Caco-2 (cell line): ENCODE measurements at regions of chr12 and their contacts with region 1.

Region 1: GRCh38 chr12:5200278-5201087 is 156.8 kb downstream of the KCNA5 start:
- DNase-seq: peak; percentile 85 to 91
- H3K4me3 ChIP-seq: no peak overlapping the region
- H3K4me3 Mint-ChIP-seq: no peak overlapping the region
- H3K27ac Mint-ChIP-seq: peak overlapping the region; percentile 31
- H3K4me1 ChIP-seq: peaks cover 33% of the 10 kb centered on the region
- H3K4me1 Mint-ChIP-seq: peaks cover 36% of the 10 kb centered on the region
- H3K27me3 ChIP-seq: no peaks in the 10 kb centered on the region
- H3K27me3 Mint-ChIP-seq: no peaks in the 10 kb centered on the region
- CTCF ChIP-seq: peak; percentile 97

Region 2: DNA sequence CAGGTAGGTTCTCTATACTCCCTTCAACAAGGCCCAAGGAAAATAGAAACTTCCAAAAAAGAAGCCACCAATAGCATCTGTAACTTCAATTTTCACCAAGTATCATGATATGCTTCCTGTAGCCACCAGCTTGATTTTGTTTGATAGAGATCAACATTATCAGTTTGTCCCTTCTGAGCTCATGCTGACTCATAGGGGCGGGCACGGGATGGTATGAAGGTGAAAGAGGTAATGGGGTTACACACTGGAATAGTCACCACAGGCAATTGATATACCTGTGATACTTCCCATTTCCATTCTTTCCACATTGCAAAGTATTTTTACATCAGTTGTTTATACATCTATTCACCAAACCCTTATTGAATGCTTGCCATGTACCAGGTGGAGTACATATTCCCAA is 22.8 kb before region 1 on chr12:
- CTCF ChIA-PET with region 1: no interaction called
- POLR2A ChIA-PET with region 1: no interaction called
- intact Hi-C with region 1: no loop called
- DNase-seq: no peak
- H3K4me3 ChIP-seq: no peak overlapping the region
- H3K4me3 Mint-ChIP-seq: no peak overlapping the region
- H3K27ac Mint-ChIP-seq: no peak overlapping the region
- H3K4me1 ChIP-seq: no peaks in the 10 kb centered on the region
- H3K4me1 Mint-ChIP-seq: no peaks in the 10 kb centered on the region
- H3K27me3 ChIP-seq: no peaks in the 10 kb centered on the region
- H3K27me3 Mint-ChIP-seq: no peaks in the 10 kb centered on the region
- CTCF ChIP-seq: no peak

Region 3: DNA sequence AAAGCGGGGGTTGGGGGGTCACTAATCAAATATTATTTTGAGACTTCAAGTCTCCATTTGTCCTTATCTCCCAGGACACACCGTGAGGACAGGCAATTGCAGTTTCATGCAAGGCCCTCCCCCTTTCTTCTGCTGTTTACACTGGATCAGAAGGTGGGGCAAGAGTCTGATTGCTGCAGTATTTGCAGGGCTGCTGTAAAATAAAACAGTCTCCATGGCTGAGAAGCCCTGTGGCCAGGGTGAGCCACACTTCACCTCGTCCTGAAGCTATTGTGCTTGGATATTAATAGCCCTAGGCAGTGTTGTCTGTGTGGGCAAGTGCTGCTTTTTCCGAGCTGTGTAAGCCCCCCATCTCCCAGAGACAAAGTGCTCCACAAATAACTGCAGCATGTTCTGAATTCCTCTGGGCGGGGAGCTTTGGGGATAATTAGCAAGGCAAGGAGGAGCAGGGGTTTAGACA is 44.1 kb after region 1 on chr12:
- CTCF ChIA-PET with region 1: interaction called, 3 read pairs
- POLR2A ChIA-PET with region 1: no interaction called
- intact Hi-C with region 1: loop called (anchors 1 kb)
- DNase-seq: peak; percentile 87 to 89
- H3K4me3 ChIP-seq: no peak overlapping the region
- H3K4me3 Mint-ChIP-seq: peak overlapping the region; percentile 48
- H3K27ac Mint-ChIP-seq: peak overlapping the region; percentile 81
- H3K4me1 ChIP-seq: peaks cover 49% of the 10 kb centered on the region
- H3K4me1 Mint-ChIP-seq: peaks cover 38% of the 10 kb centered on the region
- H3K27me3 ChIP-seq: no peaks in the 10 kb centered on the region
- H3K27me3 Mint-ChIP-seq: no peaks in the 10 kb centered on the region
- CTCF ChIP-seq: no peak

Region 4: GRCh38 chr12:5294274-5295070 is 94.0 kb after region 1 on chr12:
- CTCF ChIA-PET with region 1: interaction called, 3 read pairs
- POLR2A ChIA-PET with region 1: no interaction called
- intact Hi-C with region 1: loop called (anchors 5 kb)
- DNase-seq: no peak
- H3K4me3 ChIP-seq: no peak overlapping the region
- H3K4me3 Mint-ChIP-seq: no peak overlapping the region
- H3K27ac Mint-ChIP-seq: no peak overlapping the region
- H3K4me1 ChIP-seq: peaks cover 8% of the 10 kb centered on the region
- H3K4me1 Mint-ChIP-seq: peaks cover 6% of the 10 kb centered on the region
- H3K27me3 ChIP-seq: no peaks in the 10 kb centered on the region
- H3K27me3 Mint-ChIP-seq: no peaks in the 10 kb centered on the region
- CTCF ChIP-seq: no peak

Region 5: GRCh38 chr12:5395443-5396271 is 195.2 kb after region 1 on chr12:
- CTCF ChIA-PET with region 1: no interaction called
- POLR2A ChIA-PET with region 1: interaction called, 5 read pairs
- intact Hi-C with region 1: loop called (anchors 2 kb)
- DNase-seq: no peak
- H3K4me3 ChIP-seq: no peak overlapping the region
- H3K4me3 Mint-ChIP-seq: no peak overlapping the region
- H3K27ac Mint-ChIP-seq: peak overlapping the region; percentile 14
- H3K4me1 ChIP-seq: peaks cover 23% of the 10 kb centered on the region
- H3K4me1 Mint-ChIP-seq: peaks cover 15% of the 10 kb centered on the region
- H3K27me3 ChIP-seq: no peaks in the 10 kb centered on the region
- H3K27me3 Mint-ChIP-seq: no peaks in the 10 kb centered on the region
- CTCF ChIP-seq: no peak

Region 6: DNA sequence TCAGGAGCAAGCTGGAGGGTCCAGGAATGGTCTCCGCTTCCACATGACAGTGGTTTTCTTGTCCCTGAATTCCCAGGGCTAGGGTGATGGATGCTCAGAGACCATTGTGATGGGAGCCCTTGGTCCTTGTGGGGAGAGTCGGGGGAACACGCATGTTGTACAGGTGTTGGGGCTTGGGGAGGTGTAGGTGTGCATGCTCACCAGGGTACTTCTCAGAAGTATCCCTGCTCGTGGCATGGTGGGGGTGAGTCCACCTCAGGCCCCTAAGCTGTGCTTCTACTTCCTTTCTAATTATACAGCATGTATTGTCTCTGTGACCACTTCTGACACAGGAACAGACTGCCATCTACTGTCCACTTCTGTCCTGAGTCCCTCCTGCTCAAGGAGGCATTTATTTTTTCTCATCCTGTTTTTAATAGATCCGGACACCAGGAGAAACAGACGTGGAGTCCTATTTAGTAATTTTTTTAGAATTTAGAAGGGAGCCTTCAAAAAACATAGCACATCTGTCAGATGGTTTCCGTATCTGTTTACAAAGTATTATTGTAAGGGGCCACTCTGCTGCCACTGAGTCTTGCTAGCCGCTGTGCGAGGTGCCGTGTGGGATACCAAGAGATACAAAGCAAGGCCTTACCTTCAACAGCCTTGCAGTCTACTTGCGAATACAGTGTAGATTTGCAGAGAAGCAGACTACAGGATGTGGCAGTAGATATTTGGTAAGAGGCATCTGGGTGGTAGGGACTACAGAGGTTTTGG is 241.9 kb after region 1 on chr12:
- CTCF ChIA-PET with region 1: interaction called, 17 read pairs
- POLR2A ChIA-PET with region 1: no interaction called
- intact Hi-C with region 1: loop called (anchors 1 kb)
- DNase-seq: peak; percentile 65 to 76
- H3K4me3 ChIP-seq: no peak overlapping the region
- H3K4me3 Mint-ChIP-seq: no peak overlapping the region
- H3K27ac Mint-ChIP-seq: no peak overlapping the region
- H3K4me1 ChIP-seq: no peaks in the 10 kb centered on the region
- H3K4me1 Mint-ChIP-seq: peaks cover 7% of the 10 kb centered on the region
- H3K27me3 ChIP-seq: no peaks in the 10 kb centered on the region
- H3K27me3 Mint-ChIP-seq: no peaks in the 10 kb centered on the region
- CTCF ChIP-seq: peak; percentile 82 to 90

Region 7: DNA sequence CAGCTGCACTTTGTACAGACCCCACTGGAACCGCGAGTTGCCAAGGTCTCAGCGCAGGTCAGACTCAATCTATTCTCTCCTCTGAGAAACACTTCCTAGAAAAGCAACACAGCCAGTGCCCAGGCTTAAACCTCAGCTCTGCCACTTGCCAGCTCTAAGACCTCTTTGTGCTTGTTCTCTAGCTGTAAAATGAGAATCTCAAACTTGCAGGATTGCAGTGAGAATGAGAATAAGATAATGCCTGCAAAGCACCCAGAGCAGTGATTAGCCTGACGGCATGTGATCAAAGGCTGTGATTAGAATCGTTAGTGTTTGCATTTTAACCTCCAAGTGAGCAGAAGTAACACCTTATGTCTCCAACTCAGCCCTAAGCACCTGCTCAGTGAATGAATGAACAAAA is 723.3 kb after region 1 on chr12:
- CTCF ChIA-PET with region 1: no interaction called
- POLR2A ChIA-PET with region 1: no interaction called
- intact Hi-C with region 1: no loop called
- DNase-seq: no peak
- H3K4me3 ChIP-seq: no peak overlapping the region
- H3K4me3 Mint-ChIP-seq: no peak overlapping the region
- H3K27ac Mint-ChIP-seq: no peak overlapping the region
- H3K4me1 ChIP-seq: no peaks in the 10 kb centered on the region
- H3K4me1 Mint-ChIP-seq: no peaks in the 10 kb centered on the region
- H3K27me3 ChIP-seq: peaks cover 2% of the 10 kb centered on the region
- H3K27me3 Mint-ChIP-seq: peaks cover 42% of the 10 kb centered on the region
- CTCF ChIP-seq: no peak